H1 (cell line): ENCODE measurements at regions of chr12 and their contacts with region 1.

Region 1: DNA sequence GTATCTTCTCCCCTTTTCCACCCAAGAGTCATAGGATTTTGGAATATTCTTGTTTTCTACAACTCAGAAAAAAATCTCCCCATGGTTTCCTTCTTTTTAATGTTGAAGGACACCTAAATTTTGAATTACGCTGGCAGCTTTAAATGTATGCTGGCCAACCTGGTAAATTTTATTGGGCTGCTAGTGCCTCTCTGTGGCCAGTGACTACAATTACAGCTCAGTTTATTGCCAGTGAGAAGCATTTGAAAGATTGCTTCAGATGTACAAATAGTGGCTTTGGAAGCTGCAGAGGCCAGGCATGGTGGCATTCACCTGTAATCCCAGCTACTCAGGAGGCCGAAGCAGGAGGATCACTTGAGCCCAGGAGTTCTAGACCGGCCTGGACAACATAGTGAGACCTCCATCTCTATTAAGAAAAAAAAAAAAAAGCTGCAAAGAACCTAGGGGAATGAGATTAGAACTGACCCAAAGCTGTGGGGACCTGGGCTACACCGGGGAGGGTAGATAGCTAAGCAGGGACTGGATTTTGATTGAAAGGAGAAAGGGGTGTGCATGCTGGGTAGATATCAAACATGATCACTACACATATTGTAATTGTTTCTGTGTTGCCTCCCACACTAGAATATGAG is 7.6 kb upstream of the RAB21 start:
- DNase-seq: no peak
- H3K4me3 ChIP-seq: no peak overlapping the region
- H3K27ac ChIP-seq: no peak overlapping the region
- H3K4me1 ChIP-seq: peaks cover 0 to 10% (median 0%) of the 10 kb centered on the region in 4 experiments; a peak in 2 of 7 replicates
- H3K27me3 ChIP-seq: no peaks in the 10 kb centered on the region
- CTCF ChIP-seq: peak in 2 of 3 experiments; percentile 75 to 76; a peak in 3 of 4 replicates
- EP300 ChIP-seq: no peak
- POLR2A ChIP-seq: no peak
- RAD21 ChIP-seq: peak; percentile 88 to 89

Region 2: DNA sequence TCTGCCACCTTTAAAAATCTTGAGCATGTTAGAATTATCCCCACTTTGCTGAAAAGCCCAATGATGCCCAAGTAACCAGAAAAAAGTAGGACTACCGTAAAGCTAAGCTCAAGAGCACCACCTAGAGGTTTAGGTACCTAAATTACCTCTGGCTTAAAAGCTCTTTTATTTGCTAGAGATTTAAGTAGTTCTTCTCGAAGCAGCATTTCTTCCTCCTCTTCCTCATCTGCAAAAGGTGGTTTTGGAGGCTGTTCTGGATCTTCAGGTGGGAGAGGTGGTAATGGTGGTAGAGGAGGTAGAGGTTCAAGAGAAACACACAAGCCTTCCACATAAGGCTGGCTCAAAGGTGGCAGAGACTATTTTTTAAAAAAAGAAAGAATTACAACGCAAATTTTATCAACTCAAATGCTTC is 110.4 kb before region 1 on chr12:
- CTCF ChIA-PET with region 1: interaction called, 24 read pairs
- POLR2A ChIA-PET with region 1: interaction called, 3 read pairs
- DNase-seq: no peak
- H3K4me3 ChIP-seq: no peak overlapping the region
- H3K27ac ChIP-seq: no peak overlapping the region
- H3K4me1 ChIP-seq: no peaks in the 10 kb centered on the region
- H3K27me3 ChIP-seq: no peaks in the 10 kb centered on the region
- CTCF ChIP-seq: peak in 2 of 3 experiments; percentile 62 to 78; a peak in 2 of 4 replicates
- EP300 ChIP-seq: no peak
- POLR2A ChIP-seq: no peak
- RAD21 ChIP-seq: peak; percentile 70 to 71

Region 3: DNA sequence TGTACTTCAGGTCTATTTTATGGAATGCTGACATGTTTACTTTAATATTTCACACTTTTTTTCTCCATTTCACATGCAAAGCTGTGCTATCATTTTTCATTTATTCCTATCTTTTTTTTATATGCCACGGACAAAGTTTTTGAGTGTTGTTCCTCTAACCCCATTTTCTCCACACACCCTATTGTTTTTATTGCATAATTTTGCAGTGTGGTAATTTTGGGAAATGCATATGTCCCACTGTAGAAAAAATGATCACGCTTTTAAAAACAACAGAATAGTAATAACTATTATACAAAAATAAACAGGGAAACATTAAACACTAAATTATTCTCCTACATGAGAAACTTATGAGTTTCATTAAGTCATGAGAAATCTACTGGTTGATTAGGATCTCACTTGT is 97.7 kb before region 1 on chr12:
- CTCF ChIA-PET with region 1: interaction called, 12 read pairs
- POLR2A ChIA-PET with region 1: no interaction called
- DNase-seq: no peak
- H3K4me3 ChIP-seq: no peak overlapping the region
- H3K27ac ChIP-seq: no peak overlapping the region
- H3K4me1 ChIP-seq: no peaks in the 10 kb centered on the region
- H3K27me3 ChIP-seq: no peaks in the 10 kb centered on the region
- CTCF ChIP-seq: no peak
- EP300 ChIP-seq: no peak
- POLR2A ChIP-seq: no peak
- RAD21 ChIP-seq: no peak

Region 4: DNA sequence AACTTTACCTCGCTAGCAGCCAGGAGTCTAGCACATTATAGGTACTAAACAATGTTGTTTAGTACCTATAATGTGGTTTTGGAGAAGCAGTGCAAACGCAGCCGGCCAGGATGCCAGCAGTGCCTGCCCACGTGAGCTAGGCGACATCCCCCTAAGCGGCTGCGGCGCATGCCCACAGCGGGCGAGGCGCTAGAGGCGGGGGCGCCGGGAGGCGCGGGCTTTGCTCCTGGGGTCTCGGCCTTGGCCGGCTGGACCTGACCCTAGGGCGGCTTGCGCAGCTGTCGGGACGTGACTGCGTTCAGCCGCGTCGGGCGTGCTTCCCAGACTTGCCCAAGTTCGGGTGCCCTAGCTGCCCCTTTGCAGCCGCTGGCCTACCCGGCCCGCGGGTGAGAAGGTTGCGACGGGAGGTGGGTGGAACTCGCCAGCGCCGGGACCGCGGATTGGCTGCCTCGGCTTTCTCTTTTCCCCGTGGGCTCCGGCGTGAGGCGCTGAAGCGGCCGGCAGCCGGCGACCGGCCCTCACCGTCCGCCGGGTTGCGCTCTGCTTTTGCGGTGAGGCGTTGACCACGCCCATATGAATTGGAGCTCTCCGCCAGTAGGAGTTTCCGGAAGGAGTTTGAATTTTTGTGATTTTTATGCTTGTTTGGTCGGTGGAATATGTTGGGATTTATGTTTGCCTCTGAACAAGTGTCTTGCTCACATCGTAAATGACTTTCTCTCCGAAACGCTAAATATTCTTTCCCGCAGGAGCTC is 61.0 kb before region 1 on chr12 and contains the start of gene TMEM19:
- CTCF ChIA-PET with region 1: interaction called, 15 read pairs
- POLR2A ChIA-PET with region 1: interaction called, 5 read pairs
- DNase-seq: peak; percentile 49 to 86
- H3K4me3 ChIP-seq: peak within 1 kb of the TSS; percentile 46 to 78 (median 70)
- H3K27ac ChIP-seq: peak within 1 kb of the TSS; percentile 89
- H3K4me1 ChIP-seq: no peaks in the 10 kb centered on the region
- H3K27me3 ChIP-seq: no peaks in the 10 kb centered on the region
- CTCF ChIP-seq: peak; percentile 1 to 20 (median 6); a peak in 3 of 4 replicates
- EP300 ChIP-seq: no peak
- POLR2A ChIP-seq: peak; percentile 74 to 90
- RAD21 ChIP-seq: no peak; a peak in 2 of 4 replicates
- total RNA-seq, gene TMEM19: 12.6 and 14.7 TPM in 2 replicates

Region 5: DNA sequence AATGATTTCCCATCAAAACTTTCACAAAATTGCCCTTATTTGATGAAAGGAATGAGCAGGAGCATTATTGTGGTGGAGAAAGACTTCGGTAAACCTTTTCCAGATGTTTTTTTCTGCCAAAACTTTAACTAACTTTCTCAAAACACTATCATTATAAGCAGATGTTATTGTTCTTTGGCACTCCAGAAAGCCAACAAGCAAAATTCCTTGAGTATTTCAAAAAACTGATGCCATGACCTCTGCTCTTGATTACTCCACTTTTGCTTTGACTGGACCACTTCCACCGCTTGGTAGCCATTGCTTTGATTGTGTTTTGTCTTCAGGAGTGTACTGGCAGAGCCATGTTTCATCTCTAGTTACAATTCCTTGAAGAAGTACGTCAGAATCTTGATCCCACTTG is 22.1 kb before region 1 on chr12:
- CTCF ChIA-PET with region 1: interaction called, 97 read pairs
- POLR2A ChIA-PET with region 1: interaction called, 3 read pairs
- DNase-seq: no peak
- H3K4me3 ChIP-seq: no peak overlapping the region
- H3K27ac ChIP-seq: no peak overlapping the region
- H3K4me1 ChIP-seq: no peaks in the 10 kb centered on the region
- H3K27me3 ChIP-seq: no peaks in the 10 kb centered on the region
- CTCF ChIP-seq: no peak
- EP300 ChIP-seq: no peak
- POLR2A ChIP-seq: no peak
- RAD21 ChIP-seq: no peak

Region 6: DNA sequence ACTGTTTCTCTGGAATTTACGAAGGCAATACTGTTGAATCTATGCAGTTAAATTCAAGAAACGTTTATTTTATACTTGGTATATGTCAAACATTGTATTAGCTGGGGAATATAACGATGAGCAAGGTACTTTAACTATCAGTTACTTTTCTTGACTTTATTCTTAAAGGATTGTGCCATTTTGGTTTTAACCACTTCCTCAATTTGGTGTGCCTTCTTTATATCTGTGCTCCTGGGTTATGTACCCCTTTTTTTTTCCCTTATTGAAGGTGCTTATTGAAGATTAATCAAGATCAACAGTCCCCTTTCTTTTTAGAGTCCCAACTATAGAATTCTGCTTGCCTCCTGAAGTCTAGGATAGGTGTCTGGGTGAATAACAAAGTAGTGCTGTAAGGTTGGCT is 13.4 kb after region 1 on chr12:
- CTCF ChIA-PET with region 1: interaction called, 13 read pairs
- POLR2A ChIA-PET with region 1: interaction called, 3 read pairs
- DNase-seq: no peak
- H3K4me3 ChIP-seq: no peak overlapping the region
- H3K27ac ChIP-seq: no peak overlapping the region
- H3K4me1 ChIP-seq: peaks cover 0 to 4% (median 1%) of the 10 kb centered on the region in 4 experiments; a peak in 2 of 7 replicates
- H3K27me3 ChIP-seq: no peaks in the 10 kb centered on the region
- CTCF ChIP-seq: no peak
- EP300 ChIP-seq: no peak
- POLR2A ChIP-seq: no peak
- RAD21 ChIP-seq: no peak

Region 7: GRCh38 chr12:71787580-71787979 is 40.5 kb after region 1 on chr12:
- CTCF ChIA-PET with region 1: no interaction called
- POLR2A ChIA-PET with region 1: no interaction called
- DNase-seq: no peak
- H3K4me3 ChIP-seq: no peak overlapping the region
- H3K27ac ChIP-seq: no peak overlapping the region
- H3K4me1 ChIP-seq: no peaks in the 10 kb centered on the region
- H3K27me3 ChIP-seq: peaks cover 0 to 1% (median 0%) of the 10 kb centered on the region in 4 experiments; a peak in 1 of 7 replicates
- CTCF ChIP-seq: no peak
- EP300 ChIP-seq: no peak
- POLR2A ChIP-seq: no peak
- RAD21 ChIP-seq: no peak